ENCODE measurements at regions of chr11 and their contacts with region 1.

Region 1: DNA sequence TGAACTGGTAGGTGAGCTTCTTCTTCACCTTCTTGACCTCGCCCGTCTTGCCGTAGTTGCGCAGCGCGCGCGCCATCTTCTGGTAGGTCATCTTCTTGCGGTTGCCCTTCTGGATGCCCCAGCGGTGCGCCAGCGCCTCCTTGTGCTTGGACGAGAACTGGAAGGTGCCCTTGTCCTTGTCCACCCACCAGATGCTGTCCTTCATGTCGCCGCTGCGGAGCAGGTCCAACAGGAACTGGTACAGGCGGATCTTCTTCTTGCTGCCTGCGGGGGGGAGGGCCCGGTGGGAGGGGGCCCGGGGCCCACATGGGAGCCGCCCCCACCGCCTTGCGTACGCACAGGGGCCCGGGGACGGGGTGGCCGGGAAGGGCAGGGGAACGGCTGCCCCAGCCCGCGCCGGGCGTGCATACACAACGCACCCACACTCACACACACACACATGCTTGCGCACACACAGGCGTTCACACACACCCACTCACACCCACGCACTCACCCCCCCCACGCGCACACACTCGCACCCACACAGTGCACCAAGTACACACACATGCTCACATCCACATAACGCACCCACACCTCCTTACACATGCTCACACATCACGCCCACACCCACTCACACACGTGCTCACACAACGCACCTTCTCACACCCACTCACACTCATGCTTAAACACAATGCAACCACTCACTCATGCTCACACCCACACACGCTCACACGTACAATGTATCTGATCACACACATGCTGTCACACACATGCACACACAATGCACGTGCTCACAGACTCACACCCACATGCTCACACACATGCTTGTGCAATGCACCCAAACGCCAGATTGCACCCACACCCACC is 3.0 kb upstream of the MYBPC3 start:
- DNase-seq: peak; percentile 92
- H3K4me3 ChIP-seq: peak overlapping the region in 1 of 3 experiments; percentile 12
- H3K27ac ChIP-seq: no peak overlapping the region
- H3K4me1 ChIP-seq: no peaks in the 10 kb centered on the region
- H3K27me3 ChIP-seq: no peaks in the 10 kb centered on the region
- CTCF ChIP-seq: peak; percentile 97 to 100
- POLR2A ChIP-seq: no peak

Region 2: GRCh38 chr11:46889689-46890475 is 465.6 kb before region 1 on chr11:
- CTCF ChIA-PET with region 1: interaction called, 5 read pairs
- POLR2A ChIA-PET with region 1: no interaction called
- dilution Hi-C with region 1: no loop called
- intact Hi-C with region 1: loop called (anchors 1 kb)
- DNase-seq: peak; percentile 72
- H3K4me3 ChIP-seq: no peak overlapping the region
- H3K27ac ChIP-seq: no peak overlapping the region
- H3K4me1 ChIP-seq: no peaks in the 10 kb centered on the region
- H3K27me3 ChIP-seq: no peaks in the 10 kb centered on the region
- CTCF ChIP-seq: peak; percentile 75 to 81
- POLR2A ChIP-seq: no peak

Region 3: GRCh38 chr11:47176328-47177228 is 178.9 kb before region 1 on chr11 and contains the start of gene ARFGAP2:
- CTCF ChIA-PET with region 1: interaction called, 46 read pairs
- POLR2A ChIA-PET with region 1: no interaction called
- dilution Hi-C with region 1: no loop called
- intact Hi-C with region 1: loop called (anchors 1 kb)
- DNase-seq: peak; percentile 97
- H3K4me3 ChIP-seq: peak within 1 kb of the TSS; percentile 69 to 95 (median 79)
- H3K27ac ChIP-seq: peak within 1 kb of the TSS; percentile 91
- H3K4me1 ChIP-seq: peaks cover 13% of the 10 kb centered on the region
- H3K27me3 ChIP-seq: no peaks in the 10 kb centered on the region
- CTCF ChIP-seq: no peak
- POLR2A ChIP-seq: peak; percentile 80
- total RNA-seq, gene ARFGAP2: 78.9 and 84.3 TPM in 2 replicates

Region 4: GRCh38 chr11:47213985-47214564 is 141.4 kb before region 1 on chr11:
- CTCF ChIA-PET with region 1: interaction called, 11 read pairs
- POLR2A ChIA-PET with region 1: no interaction called
- dilution Hi-C with region 1: no loop called
- intact Hi-C with region 1: no loop called
- DNase-seq: peak; percentile 77
- H3K4me3 ChIP-seq: peak overlapping the region in 2 of 3 experiments; percentile 18 to 58
- H3K27ac ChIP-seq: peak overlapping the region; percentile 40
- H3K4me1 ChIP-seq: peaks cover 23% of the 10 kb centered on the region
- H3K27me3 ChIP-seq: no peaks in the 10 kb centered on the region
- CTCF ChIP-seq: no peak
- POLR2A ChIP-seq: peak; percentile 8

Region 5: GRCh38 chr11:47233989-47234668 is 121.4 kb before region 1 on chr11:
- CTCF ChIA-PET with region 1: interaction called, 28 read pairs
- POLR2A ChIA-PET with region 1: no interaction called
- dilution Hi-C with region 1: no loop called
- intact Hi-C with region 1: no loop called
- DNase-seq: peak; percentile 29
- H3K4me3 ChIP-seq: no peak overlapping the region
- H3K27ac ChIP-seq: no peak overlapping the region
- H3K4me1 ChIP-seq: peaks cover 15% of the 10 kb centered on the region
- H3K27me3 ChIP-seq: no peaks in the 10 kb centered on the region
- CTCF ChIP-seq: peak in 1 of 2 donors; percentile 27
- POLR2A ChIP-seq: no peak

Region 6: DNA sequence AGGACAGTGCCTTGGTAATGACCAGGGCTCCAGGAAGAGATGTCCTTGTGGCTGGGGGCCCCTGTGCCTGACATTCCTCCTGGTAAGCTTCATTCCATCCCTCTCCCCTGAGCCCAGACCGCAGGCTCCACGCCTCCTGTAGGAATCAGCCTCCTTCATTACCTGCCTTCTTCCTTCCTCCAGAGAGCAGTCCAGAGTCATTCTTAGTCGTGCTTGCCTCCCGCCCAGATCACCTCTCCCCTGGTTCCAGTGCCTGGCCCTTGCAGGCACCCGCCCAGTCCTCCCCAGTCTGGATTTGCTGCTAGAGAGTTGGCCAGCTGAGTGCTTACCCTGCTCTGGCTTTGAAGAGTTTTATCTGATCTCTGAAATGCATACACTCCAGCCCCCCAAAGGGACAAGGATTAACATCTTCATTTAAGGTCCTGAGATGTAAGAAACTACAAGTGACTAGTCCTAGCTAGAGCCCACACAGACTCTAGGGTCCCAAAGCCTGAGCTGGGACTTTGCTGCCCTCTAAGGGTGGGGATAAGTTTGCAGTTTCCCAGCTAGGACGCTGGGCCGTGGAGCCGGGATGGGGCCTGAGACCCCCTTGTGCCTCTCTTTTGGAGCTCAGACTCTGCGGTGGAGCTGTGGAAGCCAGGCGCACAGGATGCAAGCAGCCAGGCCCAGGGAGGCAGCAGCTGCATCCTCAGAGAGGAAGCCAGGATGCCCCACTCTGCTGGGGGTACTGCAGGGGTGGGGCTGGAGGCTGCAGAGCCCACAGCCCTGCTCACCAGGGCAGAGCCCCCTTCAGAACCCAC is 96.1 kb before region 1 on chr11:
- CTCF ChIA-PET with region 1: interaction called, 8 read pairs
- POLR2A ChIA-PET with region 1: no interaction called
- dilution Hi-C with region 1: no loop called
- intact Hi-C with region 1: loop called (anchors 2 kb)
- DNase-seq: peak; percentile 57
- H3K4me3 ChIP-seq: no peak overlapping the region
- H3K27ac ChIP-seq: no peak overlapping the region
- H3K4me1 ChIP-seq: peaks cover 22% of the 10 kb centered on the region
- H3K27me3 ChIP-seq: no peaks in the 10 kb centered on the region
- CTCF ChIP-seq: peak; percentile 75 to 80
- POLR2A ChIP-seq: no peak

Region 7: GRCh38 chr11:47329987-47330931 is 25.2 kb before region 1 on chr11:
- CTCF ChIA-PET with region 1: interaction called, 33 read pairs
- POLR2A ChIA-PET with region 1: no interaction called
- dilution Hi-C with region 1: no loop called
- intact Hi-C with region 1: no loop called
- DNase-seq: peak; percentile 52
- H3K4me3 ChIP-seq: no peak overlapping the region
- H3K27ac ChIP-seq: peak overlapping the region; percentile 40
- H3K4me1 ChIP-seq: peaks cover 16% of the 10 kb centered on the region
- H3K27me3 ChIP-seq: no peaks in the 10 kb centered on the region
- CTCF ChIP-seq: no peak
- POLR2A ChIP-seq: no peak

Measured in endothelial cell of umbilical vein (primary cell).